ENCODE measurements at regions of chr1 and their contacts with region 1.

Region 1: GRCh38 chr1:175154629-175155472 is 37.7 kb downstream of the KIAA0040 start:
- DNase-seq: peak in 3 of 4 donors; percentile 72 to 89 (median 74)
- ATAC-seq: peak; percentile 87
- H3K4me3 ChIP-seq: no peak overlapping the region
- H3K27ac ChIP-seq: no peak overlapping the region
- H3K4me1 ChIP-seq: peaks cover 0 to 14% of the 10 kb centered on the region in 2 donors
- H3K27me3 ChIP-seq: peaks cover 0 to 35% of the 10 kb centered on the region in 2 donors
- CTCF ChIP-seq: peak; percentile 82 to 87

Region 2: GRCh38 chr1:175221666-175222175 is 66.9 kb after region 1 on chr1:
- intact Hi-C with region 1: loop called in 1 of 2 experiments (anchors 5 kb)
- DNase-seq: peak in 2 of 4 donors; percentile 32 to 44
- ATAC-seq: peak; percentile 94
- H3K4me3 ChIP-seq: no peak overlapping the region
- H3K27ac ChIP-seq: peak overlapping the region in 1 of 2 donors; percentile 50
- H3K4me1 ChIP-seq: peaks cover 8 to 11% of the 10 kb centered on the region in 2 donors
- H3K27me3 ChIP-seq: no peaks in the 10 kb centered on the region
- CTCF ChIP-seq: no peak

Region 3: DNA sequence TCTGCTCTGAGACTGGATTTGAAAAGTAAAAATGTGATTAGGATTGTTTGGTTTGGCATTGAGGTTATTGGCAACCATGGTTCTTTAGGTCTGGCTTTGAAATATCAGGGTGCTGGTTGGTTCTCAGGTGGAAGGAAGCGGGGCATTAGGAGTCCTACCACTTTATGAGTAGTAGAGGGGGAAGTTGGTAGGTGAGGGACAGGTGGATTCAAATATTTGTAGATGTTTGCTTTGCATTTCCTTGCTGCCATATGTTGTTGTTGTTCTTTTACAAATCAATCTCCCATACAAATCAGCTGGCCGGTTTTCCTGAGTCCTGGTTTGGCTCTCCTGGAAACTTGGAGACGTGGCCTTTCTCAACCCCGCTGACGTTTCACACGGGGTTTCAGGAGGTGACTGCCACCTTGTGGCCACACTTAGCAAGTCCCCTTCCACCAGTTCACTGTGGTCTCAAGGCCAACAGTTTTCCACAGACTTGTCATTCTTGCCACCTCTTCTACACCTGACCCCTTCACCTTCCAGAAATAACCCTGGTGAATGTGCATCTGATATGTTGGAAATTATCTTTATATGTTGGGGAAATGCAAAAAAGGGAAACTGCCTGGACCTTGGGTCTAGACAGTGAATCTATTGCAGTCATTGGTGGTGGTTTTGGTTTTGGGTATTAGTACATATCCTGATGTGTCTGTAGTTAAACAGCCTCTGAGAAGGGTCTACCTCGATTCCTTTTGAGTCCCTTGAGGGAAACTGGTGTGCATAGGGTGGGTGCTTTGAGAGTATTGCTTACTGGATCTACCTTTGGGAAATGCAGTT is 164.8 kb after region 1 on chr1:
- intact Hi-C with region 1: loop called (anchors 2 to 10 kb)
- DNase-seq: peak; percentile 66 to 83 (median 75)
- ATAC-seq: peak; percentile 98
- H3K4me3 ChIP-seq: no peak overlapping the region
- H3K27ac ChIP-seq: peak overlapping the region in 1 of 2 donors; percentile 51
- H3K4me1 ChIP-seq: peaks cover 0 to 25% of the 10 kb centered on the region in 2 donors
- H3K27me3 ChIP-seq: no peaks in the 10 kb centered on the region
- CTCF ChIP-seq: peak; percentile 80 to 94